ENCODE measurements at regions of chr17 and their contacts with region 1.

Region 1: GRCh38 chr17:76278952-76279741 is 14.0 kb downstream of the UBALD2 start:
- H3K4me3 ChIP-seq: no peak overlapping the region
- H3K27ac ChIP-seq: no peak overlapping the region
- H3K4me1 ChIP-seq: no peaks in the 10 kb centered on the region
- CTCF ChIP-seq: peak; percentile 91

Region 2: GRCh38 chr17:76103274-76104139 is 175.6 kb before region 1 on chr17 and contains the start of gene EXOC7:
- CTCF ChIA-PET with region 1: interaction called, 19 read pairs
- POLR2A ChIA-PET with region 1: interaction called, 3 read pairs
- H3K4me3 ChIP-seq: peak within 1 kb of the TSS; percentile 71
- H3K27ac ChIP-seq: peak within 1 kb of the TSS; percentile 83
- H3K4me1 ChIP-seq: 0 out of 2 replicates have a peak, but pooled peaks cover 4% of the 10 kb centered on the region
- CTCF ChIP-seq: peak; percentile 26; the same call in 1 of the 2 replicates

Region 3: DNA sequence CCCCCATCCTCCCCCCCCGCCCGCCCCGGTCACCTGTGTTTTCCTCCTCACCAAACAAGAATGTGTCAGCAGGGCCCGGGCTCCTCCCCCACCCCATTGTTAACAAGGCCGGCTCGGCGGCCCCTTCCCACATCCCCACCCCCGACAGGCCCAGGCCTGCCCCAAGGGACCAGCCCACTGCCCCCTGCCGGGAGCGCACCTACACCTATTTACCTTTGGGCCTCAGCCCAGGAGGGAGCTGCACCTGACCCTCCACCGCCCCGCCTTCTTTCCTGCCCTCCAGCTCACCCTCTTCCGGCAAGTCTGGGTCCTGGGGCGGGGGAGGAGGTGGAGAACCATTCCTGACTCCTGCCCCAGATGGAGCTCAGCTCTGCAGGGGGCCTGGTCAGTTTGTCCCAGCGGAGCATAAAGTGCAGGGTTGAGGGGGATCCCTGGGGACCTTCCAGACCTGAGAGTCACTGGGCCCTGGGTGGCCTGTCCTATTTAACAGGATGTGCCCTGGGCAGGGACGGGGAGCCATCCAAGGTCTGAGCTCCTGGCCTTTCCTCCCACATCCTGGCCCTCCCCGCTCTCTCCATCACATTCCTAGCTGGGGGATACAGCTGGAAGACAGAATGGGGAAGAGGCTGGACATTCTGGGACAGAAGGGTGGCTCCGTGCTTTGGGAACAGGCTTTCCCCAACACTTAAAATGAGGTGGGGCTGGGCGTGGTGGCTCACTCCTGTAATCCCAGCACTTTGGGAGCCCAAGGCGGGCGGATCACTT is 146.4 kb before region 1 on chr17:
- CTCF ChIA-PET with region 1: interaction called, 191 read pairs
- POLR2A ChIA-PET with region 1: no interaction called
- H3K4me3 ChIP-seq: no peak overlapping the region
- H3K27ac ChIP-seq: no peak overlapping the region
- H3K4me1 ChIP-seq: peaks cover 4% of the 10 kb centered on the region
- CTCF ChIP-seq: no peak

Region 4: DNA sequence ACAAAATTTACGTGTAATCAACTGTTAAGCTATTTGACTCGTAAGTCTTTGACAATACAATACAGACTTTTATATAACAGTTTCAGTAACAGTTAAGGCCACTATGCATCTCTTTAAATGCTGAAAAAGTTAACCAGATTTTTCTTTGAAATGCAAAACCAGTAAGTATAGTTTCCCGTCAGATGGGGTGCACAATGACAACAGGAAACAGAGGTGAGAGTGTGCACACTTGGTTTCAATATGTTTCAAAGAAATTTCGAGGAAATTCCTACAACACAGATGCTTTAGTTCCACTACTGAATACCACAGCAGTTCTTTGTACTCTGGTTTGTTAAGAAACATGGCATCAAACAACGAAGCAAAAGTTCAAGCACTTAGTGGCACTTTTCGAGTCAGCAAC is 87.3 kb before region 1 on chr17:
- CTCF ChIA-PET with region 1: interaction called, 14 read pairs
- POLR2A ChIA-PET with region 1: no interaction called
- H3K4me3 ChIP-seq: no peak overlapping the region
- H3K27ac ChIP-seq: no peak overlapping the region
- H3K4me1 ChIP-seq: peaks cover 11% of the 10 kb centered on the region
- CTCF ChIP-seq: no peak

Region 5: DNA sequence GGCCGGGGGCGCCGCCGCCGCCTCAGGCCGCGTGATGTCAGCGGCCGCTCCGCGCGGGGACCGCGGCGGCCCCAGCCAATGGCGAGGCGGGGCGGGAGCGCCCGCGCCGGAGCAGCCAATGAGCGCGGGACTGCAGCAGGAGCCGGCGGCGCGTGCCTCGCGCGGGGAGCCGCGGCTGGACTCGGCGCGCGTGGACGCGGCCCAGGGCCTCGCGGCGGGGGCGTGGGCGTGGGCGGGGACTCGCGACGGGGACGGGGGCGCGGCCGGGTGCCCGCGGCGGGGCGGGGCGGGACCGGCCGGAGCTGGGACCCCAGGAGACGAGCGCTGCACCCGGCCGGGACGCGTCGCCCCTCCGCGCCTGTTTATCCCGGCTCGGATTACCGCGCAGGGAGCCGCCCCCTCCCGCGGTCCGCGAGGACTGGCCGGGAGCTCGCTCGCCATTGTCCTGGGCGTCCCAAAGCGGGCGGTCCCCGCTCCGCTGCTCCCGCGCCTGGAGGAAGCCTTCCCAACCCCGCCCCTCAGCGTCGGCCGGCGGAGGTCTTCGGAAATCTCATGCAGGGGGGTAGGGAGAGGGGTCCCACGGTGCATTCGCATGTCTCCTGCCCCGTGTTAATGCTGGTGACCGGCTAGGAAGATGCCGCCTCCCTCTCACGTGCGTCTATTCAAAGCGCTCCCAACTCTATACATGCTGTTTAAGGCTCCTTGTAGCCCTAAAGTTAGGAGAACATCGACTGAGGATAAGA is 38.5 kb before region 1 on chr17 and contains the start of gene RNF157:
- CTCF ChIA-PET with region 1: interaction called, 19 read pairs
- POLR2A ChIA-PET with region 1: interaction called, 3 read pairs
- H3K4me3 ChIP-seq: peak within 1 kb of the TSS; percentile 33
- H3K27ac ChIP-seq: peak within 1 kb of the TSS; percentile 21; the same call in 1 of the 2 replicates
- H3K4me1 ChIP-seq: peaks cover 7% of the 10 kb centered on the region
- CTCF ChIP-seq: no peak

Region 6: DNA sequence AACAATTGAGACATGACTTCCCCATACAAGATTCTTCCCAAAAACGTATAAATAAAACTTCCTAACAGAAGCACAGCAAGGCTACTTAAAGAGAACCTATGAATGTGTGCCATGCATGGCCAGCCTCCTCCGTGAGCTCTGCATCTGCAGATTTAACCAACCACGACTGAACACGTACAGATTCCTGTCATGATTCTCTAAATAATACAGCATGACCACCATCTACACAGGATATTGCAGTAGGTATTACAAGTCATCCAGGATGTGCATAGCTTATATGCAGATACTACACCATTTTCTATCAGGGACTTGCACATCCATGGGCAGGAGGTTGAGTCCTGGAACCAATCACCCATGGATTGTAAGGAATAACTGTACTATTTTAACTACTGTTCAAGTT is 30.3 kb after region 1 on chr17:
- CTCF ChIA-PET with region 1: no interaction called
- POLR2A ChIA-PET with region 1: no interaction called
- H3K4me3 ChIP-seq: no peak overlapping the region
- H3K27ac ChIP-seq: no peak overlapping the region
- H3K4me1 ChIP-seq: no peaks in the 10 kb centered on the region
- CTCF ChIP-seq: no peak

Region 7: GRCh38 chr17:76506408-76507349 is 227.5 kb after region 1 on chr17:
- CTCF ChIA-PET with region 1: interaction called, 10 read pairs
- POLR2A ChIA-PET with region 1: no interaction called
- H3K4me3 ChIP-seq: no peak overlapping the region
- H3K27ac ChIP-seq: no peak overlapping the region
- H3K4me1 ChIP-seq: peaks cover 3% of the 10 kb centered on the region; the same call in 1 of the 2 replicates
- CTCF ChIP-seq: peak; percentile 95

Measured in HEK293 (cell line).